Left cardiac atrium (tissue), 4 donors: ENCODE measurements at regions of chr22 and their contacts with region 1.

Region 1: DNA sequence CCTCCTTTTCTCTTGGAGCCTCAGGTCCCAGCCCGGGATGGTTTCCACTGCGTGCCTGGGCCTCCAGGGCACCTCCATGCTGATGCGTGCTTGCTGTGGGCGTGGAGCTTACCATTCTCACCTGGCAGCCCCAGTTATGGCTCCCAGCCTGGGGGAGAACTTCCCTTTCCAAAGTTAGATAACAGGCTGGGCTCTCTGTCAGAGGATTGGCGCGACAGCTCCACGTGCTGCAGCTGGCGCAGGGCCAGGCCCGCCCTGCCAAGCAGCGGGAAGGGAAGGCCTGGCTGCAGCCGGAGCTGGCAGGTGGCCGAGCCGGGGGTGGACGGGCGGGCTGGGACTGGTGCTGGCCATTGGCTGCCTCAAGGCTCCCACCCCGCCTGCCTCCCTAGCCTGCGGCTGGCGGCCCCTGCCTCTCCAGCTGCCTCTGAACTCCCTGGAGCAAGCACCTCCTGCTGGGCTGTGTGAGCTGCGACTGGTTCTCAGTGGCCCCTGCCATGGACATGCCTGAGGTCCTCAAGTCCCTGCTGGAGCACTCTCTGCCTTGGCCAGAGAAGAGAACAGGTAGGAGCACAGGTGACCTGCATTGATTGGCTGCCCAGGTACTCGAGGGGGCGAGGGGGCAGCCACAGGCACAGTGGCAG is 14.6 kb upstream of the TEF start:
- DNase-seq: peak; percentile 97
- ATAC-seq: peak; percentile 95

Region 2: DNA sequence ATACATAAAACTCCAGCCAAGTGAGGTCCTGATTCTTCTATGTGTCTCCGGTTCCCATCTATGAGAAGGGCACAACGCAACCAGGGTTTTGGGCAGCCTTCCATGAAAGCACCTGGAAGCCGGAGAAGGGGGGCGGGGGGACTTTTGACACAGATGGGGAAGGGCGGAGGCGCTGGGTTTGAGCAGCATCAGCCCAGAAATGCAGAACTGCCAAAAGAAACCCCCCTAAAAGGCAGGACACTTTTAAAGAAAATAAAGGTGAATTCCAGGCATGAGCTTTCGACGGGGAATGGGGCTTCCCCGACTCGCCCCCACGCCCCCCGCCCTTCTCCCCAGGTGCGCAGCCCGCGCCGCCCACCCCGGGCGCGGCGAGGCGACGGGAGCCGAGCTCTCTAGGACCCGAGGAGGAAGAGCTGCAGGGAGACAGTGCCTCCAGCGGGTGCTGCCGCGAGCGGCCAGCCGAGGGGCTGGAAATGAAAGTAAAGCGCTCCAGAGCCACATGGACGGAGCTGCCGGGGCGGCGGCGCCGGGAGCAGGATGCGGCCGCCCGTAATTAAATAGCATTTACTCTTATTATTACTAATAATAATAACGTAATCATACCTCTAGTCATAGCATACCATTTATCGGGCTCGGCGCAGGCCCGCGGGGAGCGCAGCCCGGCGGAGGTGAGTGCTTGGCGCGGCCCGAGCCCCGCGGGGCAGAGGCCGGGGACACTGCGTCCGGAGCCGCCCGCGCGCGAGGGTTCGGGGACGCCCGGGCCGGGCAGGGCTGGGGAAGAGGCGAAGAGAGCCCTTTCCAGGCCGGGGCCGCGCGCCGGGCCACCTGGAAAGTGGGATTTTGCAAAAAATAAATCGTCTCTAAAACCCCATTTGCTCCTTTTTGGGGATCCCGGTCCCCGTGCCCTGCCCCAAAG is 65.8 kb before region 1 on chr22 and contains the start of gene ZC3H7B:
- intact Hi-C with region 1: loop called in 1 of 2 experiments (anchors 10 kb)
- DNase-seq: peak; percentile 84
- ATAC-seq: peak; percentile 97 to 98
- total RNA-seq, gene ZC3H7B: 35.0 to 39.3 TPM